Dendritic cell treated with granulocyte-macrophage colony-stimulating factor and Interleukin-4, amounts not matched to agents 40 ng/mL and 50 ng/mL, for 4 days (primary cell): ENCODE measurements at regions of chr3 and their contacts with region 1.

Region 1: DNA sequence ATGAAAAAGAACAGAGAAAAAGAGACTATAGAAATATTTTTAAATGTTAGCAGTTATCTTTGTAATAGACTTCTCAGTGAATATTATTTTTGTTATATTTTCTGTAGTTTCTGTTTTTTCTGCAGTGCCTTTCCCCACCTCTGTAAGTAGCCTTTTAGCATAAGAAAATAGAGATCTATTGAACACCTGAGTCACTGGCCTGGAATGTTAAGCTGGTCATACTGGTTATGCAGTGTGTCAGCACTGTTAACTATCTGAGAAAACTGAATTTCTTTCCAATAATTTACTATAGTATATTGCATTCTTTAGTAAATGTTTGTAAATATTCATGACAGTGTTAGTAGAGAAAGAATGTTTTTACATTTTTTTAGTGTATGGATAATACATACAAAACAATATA is 79.8 kb downstream of the NECTIN3 start:
- H3K4me3 Mint-ChIP-seq: no peak overlapping the region
- H3K27ac Mint-ChIP-seq: no peak overlapping the region
- H3K4me1 Mint-ChIP-seq: no peaks in the 10 kb centered on the region
- H3K27me3 Mint-ChIP-seq: no peaks in the 10 kb centered on the region

Region 2: GRCh38 chr3:110846971-110847370 is 304.5 kb before region 1 on chr3:
- intact Hi-C with region 1: no loop called
- H3K4me3 Mint-ChIP-seq: no peak overlapping the region
- H3K27ac Mint-ChIP-seq: no peak overlapping the region
- H3K4me1 Mint-ChIP-seq: no peaks in the 10 kb centered on the region
- H3K27me3 Mint-ChIP-seq: no peaks in the 10 kb centered on the region

Region 3: GRCh38 chr3:110971010-110971585 is 180.3 kb before region 1 on chr3:
- intact Hi-C with region 1: no loop called
- H3K4me3 Mint-ChIP-seq: no peak overlapping the region
- H3K27ac Mint-ChIP-seq: no peak overlapping the region
- H3K4me1 Mint-ChIP-seq: no peaks in the 10 kb centered on the region
- H3K27me3 Mint-ChIP-seq: no peaks in the 10 kb centered on the region

Region 4: DNA sequence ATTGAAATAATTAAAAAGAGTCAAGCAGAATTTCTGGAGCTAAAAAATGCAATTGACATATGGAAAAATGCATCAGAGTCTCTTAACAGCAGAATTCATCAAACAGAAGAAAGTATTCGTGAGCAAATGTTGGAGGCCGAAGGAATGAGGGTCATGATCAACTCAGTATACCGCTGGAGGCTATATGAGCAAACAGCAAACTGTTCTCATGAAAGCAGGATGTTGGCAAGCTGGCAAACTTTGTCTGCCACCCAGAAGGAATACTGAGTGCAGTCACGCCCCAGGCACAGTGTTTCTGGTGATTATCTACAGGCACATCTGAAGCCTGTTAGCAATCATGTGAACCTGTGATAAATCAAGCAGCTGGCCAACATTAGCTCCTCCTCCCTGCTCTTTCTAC is 166.6 kb before region 1 on chr3:
- intact Hi-C with region 1: loop called (anchors 10 kb)
- H3K4me3 Mint-ChIP-seq: no peak overlapping the region
- H3K27ac Mint-ChIP-seq: no peak overlapping the region
- H3K4me1 Mint-ChIP-seq: no peaks in the 10 kb centered on the region
- H3K27me3 Mint-ChIP-seq: no peaks in the 10 kb centered on the region

Region 5: DNA sequence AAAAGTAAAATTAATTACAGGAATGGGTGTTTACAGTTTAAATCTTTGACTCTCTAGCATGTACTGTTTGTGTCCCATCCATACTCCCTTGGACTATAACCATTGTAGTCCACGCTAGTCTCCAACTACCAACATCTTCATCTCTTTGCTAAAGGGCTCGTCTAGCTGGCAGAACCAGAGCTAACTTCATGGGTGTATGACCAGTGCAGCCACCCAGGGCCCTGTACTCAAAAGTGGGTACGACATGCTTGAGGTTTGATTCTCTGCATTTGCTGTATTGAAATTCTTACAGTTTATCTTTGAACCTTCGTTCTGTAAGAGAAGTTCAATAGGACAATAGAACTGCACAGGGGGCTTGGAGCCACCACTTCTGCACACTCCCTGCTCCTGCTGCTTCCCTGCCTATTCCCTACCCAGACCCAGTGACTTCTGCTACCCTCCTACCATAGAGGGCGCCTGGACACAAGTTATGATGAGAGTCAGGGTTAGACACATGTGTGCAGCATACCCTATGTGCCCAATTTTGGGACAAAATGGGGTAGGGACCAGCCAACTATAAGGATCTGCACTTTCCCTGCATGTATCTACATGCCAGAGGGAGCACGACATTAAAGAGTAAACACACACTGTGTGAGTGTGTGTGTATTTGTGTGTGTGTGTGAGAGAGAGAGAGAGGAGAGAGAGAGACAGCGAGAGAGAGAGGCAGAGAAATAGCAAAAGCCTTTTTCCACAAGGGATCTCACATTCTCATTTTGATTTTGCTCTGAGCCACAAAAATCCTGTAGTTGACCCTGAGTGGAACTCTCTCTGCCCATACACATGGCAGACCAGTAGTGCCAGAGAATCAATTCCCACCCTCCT is 138.8 kb before region 1 on chr3:
- intact Hi-C with region 1: no loop called
- H3K4me3 Mint-ChIP-seq: no peak overlapping the region
- H3K27ac Mint-ChIP-seq: no peak overlapping the region
- H3K4me1 Mint-ChIP-seq: no peaks in the 10 kb centered on the region
- H3K27me3 Mint-ChIP-seq: no peaks in the 10 kb centered on the region

Region 6: DNA sequence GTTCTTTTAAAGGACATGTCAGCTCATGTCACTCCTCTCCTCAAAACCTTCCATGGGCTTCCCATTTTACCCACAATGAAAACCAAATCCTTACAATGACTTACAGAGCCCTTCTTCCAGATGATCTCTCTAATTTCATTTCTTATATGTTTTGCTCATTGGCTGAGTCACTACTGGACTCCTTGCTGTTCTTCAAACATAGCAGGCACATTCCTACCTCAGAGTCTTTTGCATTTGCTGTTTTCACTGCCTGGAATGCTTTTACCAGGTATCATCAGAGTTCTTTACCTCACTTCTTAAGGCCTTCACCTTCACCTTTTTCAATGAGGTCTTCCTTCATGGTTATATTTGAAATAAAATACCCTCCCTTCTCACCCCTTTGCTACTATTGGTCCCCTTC is 22.6 kb before region 1 on chr3:
- intact Hi-C with region 1: no loop called
- H3K4me3 Mint-ChIP-seq: no peak overlapping the region
- H3K27ac Mint-ChIP-seq: no peak overlapping the region
- H3K4me1 Mint-ChIP-seq: no peaks in the 10 kb centered on the region
- H3K27me3 Mint-ChIP-seq: no peaks in the 10 kb centered on the region